Activated CD4-positive, alpha-beta T cell treated with anti-CD3 and anti-CD28 coated beads for 36 hours (primary cell): ENCODE measurements at regions of chr14 and their contacts with region 1.

Region 1: DNA sequence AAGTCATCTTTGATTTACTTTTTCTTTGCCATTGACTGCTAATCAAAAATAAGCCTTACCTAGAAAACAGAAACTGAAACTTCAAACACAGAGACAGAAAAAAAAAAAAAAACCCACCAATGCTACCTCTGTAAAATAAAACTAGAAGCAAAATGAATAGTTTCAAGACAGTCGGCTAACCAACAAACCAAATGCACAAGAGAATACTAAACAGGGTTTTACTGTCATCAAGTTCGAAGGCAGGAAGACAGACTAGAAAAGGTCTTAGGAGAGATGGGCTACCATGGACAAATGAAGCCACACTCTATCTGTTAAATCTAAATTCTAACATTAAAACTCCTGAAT is 59.5 kb downstream of the SEL1L start:
- DNase-seq: no peak
- ATAC-seq: peak; percentile 71
- H3K4me3 Mint-ChIP-seq: peak overlapping the region; percentile 36
- H3K27ac Mint-ChIP-seq: peak overlapping the region; percentile 87
- H3K4me1 Mint-ChIP-seq: peaks cover 59% of the 10 kb centered on the region
- H3K27me3 Mint-ChIP-seq: no peaks in the 10 kb centered on the region

Region 2: DNA sequence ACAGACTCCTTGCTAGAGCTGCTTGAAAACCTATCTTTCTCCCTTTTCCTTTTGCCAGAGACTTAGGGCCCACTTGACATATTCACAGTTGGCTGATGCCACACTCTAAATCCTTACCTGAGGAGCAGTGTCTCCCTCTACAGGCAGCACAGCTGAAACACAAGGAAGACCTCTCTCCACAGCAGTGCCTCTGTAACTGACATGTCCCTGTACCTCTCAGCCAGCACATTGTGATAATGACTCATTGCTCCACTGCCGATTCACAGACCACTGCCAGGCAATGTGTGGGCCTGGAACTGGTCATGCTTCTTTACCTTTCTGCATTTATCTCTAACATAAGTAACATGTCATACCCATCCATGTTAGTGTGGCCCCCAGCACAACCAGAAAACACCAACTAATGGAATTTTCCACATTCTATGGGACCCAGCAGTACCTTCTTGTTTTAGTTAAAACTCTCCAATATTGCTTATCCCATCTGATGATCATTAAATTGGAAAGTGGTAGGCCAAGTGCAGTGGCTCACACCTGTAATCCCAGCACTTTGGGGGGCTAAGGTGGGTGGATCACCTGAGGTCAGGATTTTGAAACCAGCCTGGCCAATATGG is 309.8 kb before region 1 on chr14:
- CTCF ChIA-PET with region 1: no interaction called
- POLR2A ChIA-PET with region 1: no interaction called
- intact Hi-C with region 1: loop called in 1 of 2 experiments (anchors 5 kb)
- DNase-seq: peak; percentile 83
- ATAC-seq: peak; percentile 100
- H3K4me3 Mint-ChIP-seq: no peak overlapping the region
- H3K27ac Mint-ChIP-seq: peak overlapping the region; percentile 38
- H3K4me1 Mint-ChIP-seq: peaks cover 20% of the 10 kb centered on the region
- H3K27me3 Mint-ChIP-seq: no peaks in the 10 kb centered on the region

Region 3: GRCh38 chr14:81400852-81401251 is 73.3 kb before region 1 on chr14:
- CTCF ChIA-PET with region 1: interaction called, 3 read pairs
- POLR2A ChIA-PET with region 1: no interaction called
- intact Hi-C with region 1: loop called in 1 of 2 experiments (anchors 2 kb)
- DNase-seq: peak; percentile 50
- ATAC-seq: peak; percentile 61
- H3K4me3 Mint-ChIP-seq: no peak overlapping the region
- H3K27ac Mint-ChIP-seq: no peak overlapping the region
- H3K4me1 Mint-ChIP-seq: peaks cover 15% of the 10 kb centered on the region
- H3K27me3 Mint-ChIP-seq: peaks cover 12% of the 10 kb centered on the region

Region 4: GRCh38 chr14:81450100-81450531 is 24.0 kb before region 1 on chr14:
- CTCF ChIA-PET with region 1: no interaction called
- POLR2A ChIA-PET with region 1: no interaction called
- intact Hi-C with region 1: no loop called
- DNase-seq: no peak
- ATAC-seq: no peak
- H3K4me3 Mint-ChIP-seq: no peak overlapping the region
- H3K27ac Mint-ChIP-seq: no peak overlapping the region
- H3K4me1 Mint-ChIP-seq: no peaks in the 10 kb centered on the region
- H3K27me3 Mint-ChIP-seq: peaks cover 3% of the 10 kb centered on the region

Region 5: DNA sequence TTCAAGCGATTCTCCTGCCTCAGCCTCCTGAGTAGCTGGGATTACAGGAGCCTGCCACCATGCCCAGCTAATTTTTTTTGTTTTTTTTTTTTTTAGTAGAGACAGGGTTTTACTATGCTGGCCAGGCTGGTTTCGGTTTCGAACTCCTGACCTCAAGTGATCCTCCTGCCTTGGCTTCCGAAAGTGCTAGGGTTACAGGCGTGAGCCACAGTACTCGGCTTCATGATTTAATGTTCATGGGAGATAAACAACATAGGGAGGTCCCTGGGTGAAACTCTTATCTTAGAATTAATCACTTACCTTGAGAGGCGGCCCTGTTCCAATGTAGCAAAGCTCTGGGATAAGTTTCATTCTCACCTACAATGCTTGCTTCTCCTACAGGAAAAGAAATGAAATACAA is 11.3 kb after region 1 on chr14:
- CTCF ChIA-PET with region 1: interaction called, 10 read pairs
- POLR2A ChIA-PET with region 1: no interaction called
- intact Hi-C with region 1: no loop called
- DNase-seq: no peak
- ATAC-seq: peak; percentile 49
- H3K4me3 Mint-ChIP-seq: no peak overlapping the region
- H3K27ac Mint-ChIP-seq: no peak overlapping the region
- H3K4me1 Mint-ChIP-seq: peaks cover 3% of the 10 kb centered on the region
- H3K27me3 Mint-ChIP-seq: no peaks in the 10 kb centered on the region

Region 6: DNA sequence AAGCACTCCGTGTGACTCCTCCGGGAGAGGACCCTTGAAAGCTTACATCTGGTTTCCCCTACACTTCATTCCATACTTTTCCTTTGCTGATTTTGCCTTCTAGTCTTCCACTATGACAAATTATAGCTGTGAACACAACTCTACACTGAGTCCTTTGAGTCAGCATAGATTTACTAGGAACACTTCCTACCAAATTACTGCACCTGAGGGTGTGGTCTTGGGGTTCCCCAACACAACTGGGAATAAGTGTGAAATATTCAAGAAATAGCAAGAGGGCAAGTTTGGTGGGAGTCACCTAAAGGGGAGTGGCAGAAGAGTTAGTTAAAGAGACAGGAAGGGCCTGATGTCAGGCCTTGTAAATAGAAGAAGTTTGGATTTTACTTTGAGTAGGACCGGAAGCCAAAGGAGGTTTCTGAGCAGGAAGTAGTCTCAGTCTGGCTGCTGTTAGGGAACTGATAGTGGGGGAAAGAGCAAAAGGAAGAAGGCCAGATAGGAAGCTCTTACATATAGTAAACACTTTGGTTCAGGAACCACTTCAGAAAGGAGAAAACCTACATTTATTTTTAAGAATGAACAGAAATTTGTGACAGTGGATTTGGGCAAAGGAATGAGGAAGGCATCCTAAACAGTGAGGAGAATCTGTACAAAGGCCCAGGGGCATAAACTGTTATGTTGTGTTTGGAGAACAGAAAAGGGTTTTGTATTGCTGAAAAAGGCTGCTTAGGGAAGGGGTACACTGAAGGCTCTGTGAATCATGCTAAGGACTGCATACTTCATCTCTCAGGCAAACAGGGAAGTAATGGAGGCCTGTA is 45.3 kb after region 1 on chr14:
- CTCF ChIA-PET with region 1: interaction called, 4 read pairs
- POLR2A ChIA-PET with region 1: no interaction called
- intact Hi-C with region 1: loop called in 1 of 2 experiments (anchors 5 kb)
- DNase-seq: no peak
- ATAC-seq: peak; percentile 70
- H3K4me3 Mint-ChIP-seq: no peak overlapping the region
- H3K27ac Mint-ChIP-seq: peak overlapping the region; percentile 88
- H3K4me1 Mint-ChIP-seq: peaks cover 45% of the 10 kb centered on the region
- H3K27me3 Mint-ChIP-seq: no peaks in the 10 kb centered on the region

Region 7: GRCh38 chr14:81533536-81534343 is 59.6 kb after region 1 on chr14 and contains the start of gene SEL1L:
- CTCF ChIA-PET with region 1: interaction called, 4 read pairs
- POLR2A ChIA-PET with region 1: no interaction called
- intact Hi-C with region 1: loop called in 1 of 2 experiments (anchors 2 kb)
- DNase-seq: peak; percentile 99
- ATAC-seq: peak; percentile 97
- H3K4me3 Mint-ChIP-seq: peak within 1 kb of the TSS; percentile 94
- H3K27ac Mint-ChIP-seq: peak within 1 kb of the TSS; percentile 82
- H3K4me1 Mint-ChIP-seq: peaks cover 54% of the 10 kb centered on the region
- H3K27me3 Mint-ChIP-seq: no peaks in the 10 kb centered on the region
- total RNA-seq, gene SEL1L: 39.0 to 57.4 TPM